Ascending aorta (tissue), 2 donors: ENCODE measurements at regions of chr6 and their contacts with region 1.

Region 1: DNA sequence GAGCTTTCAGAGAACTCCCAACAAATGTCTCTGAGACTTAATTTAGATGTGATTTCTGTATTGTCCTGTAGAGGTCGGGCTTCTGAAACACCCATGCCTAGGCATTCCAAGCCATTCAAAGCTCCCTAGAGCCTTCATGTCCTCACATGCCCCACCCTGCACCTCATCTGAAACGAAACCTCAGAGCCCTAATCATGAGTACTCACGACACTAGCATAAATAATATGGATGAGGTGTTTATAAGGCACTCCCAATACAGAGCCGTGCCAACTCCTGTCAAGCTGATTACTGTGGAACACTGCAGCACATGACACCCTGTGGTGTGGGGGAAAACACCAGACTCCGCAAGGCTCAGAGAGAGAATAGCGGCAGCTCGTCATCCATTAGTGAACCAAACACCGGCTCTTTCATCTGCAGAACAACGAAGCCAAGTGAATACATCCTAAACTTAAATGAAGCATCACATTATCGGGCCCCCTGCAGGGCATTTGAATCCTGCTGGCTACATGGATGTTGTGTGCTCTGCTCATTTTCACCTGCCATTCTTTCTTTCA is 83.8 kb downstream of the FNDC1 start:
- DNase-seq: no peak
- H3K4me3 ChIP-seq: no peak overlapping the region
- H3K27ac ChIP-seq: no peak overlapping the region
- H3K4me1 ChIP-seq: peaks cover 5 to 9% of the 10 kb centered on the region in 2 donors
- H3K27me3 ChIP-seq: no peaks in the 10 kb centered on the region
- CTCF ChIP-seq: peak in 2 of 3 experiments; percentile 51 to 64

Region 2: GRCh38 chr6:159305804-159306537 is 52.9 kb after region 1 on chr6:
- intact Hi-C with region 1: loop called (anchors 5 kb)
- DNase-seq: no peak
- H3K4me3 ChIP-seq: no peak overlapping the region
- H3K27ac ChIP-seq: no peak overlapping the region
- H3K4me1 ChIP-seq: peaks cover 0 to 16% of the 10 kb centered on the region in 2 donors
- H3K27me3 ChIP-seq: no peaks in the 10 kb centered on the region
- CTCF ChIP-seq: no peak